Activated naive CD4-positive, alpha-beta T cell treated with anti-CD3 and anti-CD28 coated beads for 36 hours (primary cell): ENCODE measurements at regions of chr18 and their contacts with region 1.

Region 1: DNA sequence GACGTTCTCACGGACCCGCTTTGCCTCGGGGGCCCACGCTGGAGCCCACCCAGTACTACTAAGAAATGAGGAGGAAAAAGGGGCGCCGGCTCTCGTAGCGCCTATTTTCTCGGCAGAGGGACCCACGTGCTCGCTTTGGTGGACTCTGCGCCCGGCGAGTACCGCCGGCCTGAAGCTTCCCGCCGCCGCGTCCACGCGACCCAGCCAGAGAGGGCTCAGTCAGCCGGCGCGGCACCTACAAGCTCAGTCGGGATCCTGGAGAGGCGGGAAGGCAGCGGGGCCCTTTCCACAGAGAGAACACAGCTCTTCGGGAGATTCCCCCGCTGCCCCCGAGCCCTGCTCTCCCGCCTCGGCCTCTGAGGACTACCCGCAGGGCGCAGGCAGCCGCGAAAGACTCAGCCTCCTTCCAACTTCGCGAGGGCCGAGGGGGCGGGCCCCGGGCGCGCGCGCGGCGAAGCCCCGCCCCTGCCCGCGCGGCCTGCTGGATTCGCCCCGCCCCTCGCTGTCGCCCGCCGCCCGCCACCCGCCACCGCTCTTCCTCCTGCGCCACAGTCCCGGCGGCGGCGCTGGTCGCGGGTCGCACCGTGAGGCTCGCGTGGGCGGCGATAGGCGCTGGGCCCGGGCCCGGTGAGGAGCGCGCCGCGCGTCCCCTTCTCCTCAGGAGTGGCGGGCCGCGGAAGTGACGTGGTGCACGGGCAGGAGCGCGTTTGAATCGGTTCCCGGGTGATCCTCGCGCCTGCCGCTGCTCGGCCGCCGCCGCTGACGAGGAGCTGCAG is at the start of gene SMCHD1:
- DNase-seq: peak; percentile 93
- H3K4me3 Mint-ChIP-seq: peak within 1 kb of the TSS; percentile 93
- H3K27ac Mint-ChIP-seq: peak within 1 kb of the TSS; percentile 96
- H3K4me1 Mint-ChIP-seq: peaks cover 34% of the 10 kb centered on the region
- H3K27me3 Mint-ChIP-seq: no peaks in the 10 kb centered on the region
- total RNA-seq, gene SMCHD1: 91.3 to 91.5 TPM

Region 2: DNA sequence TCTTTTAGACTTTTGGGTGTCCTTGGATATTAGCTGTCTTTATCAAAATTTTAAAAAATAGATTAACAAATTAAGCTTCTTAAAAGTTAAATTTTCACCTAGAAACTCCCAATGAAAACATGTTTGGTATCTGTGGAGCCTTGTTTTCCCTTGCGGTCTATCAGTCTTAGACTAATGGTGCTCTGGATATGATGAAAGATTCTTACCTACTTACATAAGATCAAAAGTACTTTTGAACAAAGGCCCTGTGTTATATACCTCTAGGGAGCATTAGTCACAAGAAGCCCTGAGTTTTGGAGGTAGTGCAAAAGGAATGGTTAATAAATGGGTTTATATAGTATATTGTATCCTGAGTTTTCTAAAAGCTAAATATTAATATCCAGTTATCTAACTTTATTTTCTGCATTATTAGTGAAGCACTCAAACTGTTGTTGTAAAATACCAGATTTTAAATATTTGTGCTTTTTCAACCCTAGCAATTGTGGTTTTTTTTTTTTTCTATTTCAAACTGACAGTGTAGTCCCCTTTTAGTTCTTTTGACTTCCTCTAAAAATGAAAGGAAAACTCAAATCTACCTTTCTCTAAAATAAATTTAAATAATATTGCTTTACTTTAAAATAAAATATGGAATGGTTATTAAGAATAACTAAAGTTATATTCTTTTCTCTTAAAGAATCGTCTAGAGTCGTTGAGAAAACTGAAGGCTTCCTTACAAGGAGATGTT is 65.9 kb before region 1 on chr18:
- CTCF ChIA-PET with region 1: interaction called, 5 read pairs
- intact Hi-C with region 1: loop called (anchors 5 kb)
- DNase-seq: no peak
- H3K4me3 Mint-ChIP-seq: peak overlapping the region; percentile 55
- H3K27ac Mint-ChIP-seq: peak overlapping the region; percentile 93
- H3K4me1 Mint-ChIP-seq: peaks cover 59% of the 10 kb centered on the region
- H3K27me3 Mint-ChIP-seq: no peaks in the 10 kb centered on the region

Region 3: DNA sequence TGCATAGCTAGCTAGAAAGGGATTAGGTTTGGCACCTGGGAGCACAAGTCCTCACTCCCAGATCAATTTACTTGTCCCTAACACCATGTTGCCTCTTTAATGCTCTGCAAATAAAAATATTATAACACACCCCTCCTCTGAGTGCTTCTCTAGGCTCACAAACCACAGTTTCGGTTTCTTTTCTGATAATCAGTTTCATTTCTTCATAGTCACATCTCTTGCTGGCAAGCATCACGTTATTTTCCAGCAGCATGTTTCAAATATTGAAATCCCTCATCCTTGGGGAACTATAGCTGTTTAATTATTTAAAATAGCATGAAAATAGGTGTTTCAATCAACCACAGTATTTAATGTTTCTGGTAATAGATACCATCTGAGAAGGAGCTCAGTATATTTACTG is 13.7 kb before region 1 on chr18:
- CTCF ChIA-PET with region 1: interaction called, 3 read pairs
- intact Hi-C with region 1: loop called (anchors 1 kb)
- DNase-seq: no peak
- H3K4me3 Mint-ChIP-seq: peak overlapping the region; percentile 23
- H3K27ac Mint-ChIP-seq: peak overlapping the region; percentile 86
- H3K4me1 Mint-ChIP-seq: peaks cover 52% of the 10 kb centered on the region
- H3K27me3 Mint-ChIP-seq: no peaks in the 10 kb centered on the region

Region 4: GRCh38 chr18:2846636-2847364 is 191.4 kb after region 1 on chr18 and contains the start of gene EMILIN2:
- CTCF ChIA-PET with region 1: no interaction called
- intact Hi-C with region 1: loop called (anchors 1 kb)
- DNase-seq: peak; percentile 64
- H3K4me3 Mint-ChIP-seq: peak within 1 kb of the TSS; percentile 83
- H3K27ac Mint-ChIP-seq: peak within 1 kb of the TSS; percentile 61
- H3K4me1 Mint-ChIP-seq: peaks cover 18% of the 10 kb centered on the region
- H3K27me3 Mint-ChIP-seq: peaks cover 31% of the 10 kb centered on the region
- total RNA-seq, gene EMILIN2: 12.2 to 13.2 TPM

Region 5: GRCh38 chr18:2994603-2995432 is 339.5 kb after region 1 on chr18:
- CTCF ChIA-PET with region 1: no interaction called
- intact Hi-C with region 1: loop called (anchors 1 kb)
- DNase-seq: peak; percentile 85
- H3K4me3 Mint-ChIP-seq: no peak overlapping the region
- H3K27ac Mint-ChIP-seq: peak overlapping the region; percentile 78
- H3K4me1 Mint-ChIP-seq: peaks cover 91% of the 10 kb centered on the region
- H3K27me3 Mint-ChIP-seq: no peaks in the 10 kb centered on the region